ENCODE measurements at regions of chr21 and their contacts with region 1.

Region 1: GRCh38 chr21:42220138-42220701 is 1.3 kb downstream of the ABCG1 start:
- DNase-seq: peak; percentile 49 to 96 (median 73)
- ATAC-seq: peak; percentile 87
- H3K4me3 ChIP-seq: peak overlapping the region; percentile 91
- H3K4me3 Mint-ChIP-seq: peak overlapping the region; percentile 93
- H3K27ac ChIP-seq: peak overlapping the region; percentile 88 to 90
- H3K27ac Mint-ChIP-seq: peak overlapping the region; percentile 91
- H3K4me1 ChIP-seq: peaks cover 35% of the 10 kb centered on the region
- H3K4me1 Mint-ChIP-seq: peaks cover 41% of the 10 kb centered on the region
- H3K27me3 ChIP-seq: no peaks in the 10 kb centered on the region
- H3K27me3 Mint-ChIP-seq: no peaks in the 10 kb centered on the region
- CTCF ChIP-seq: no peak

Region 2: GRCh38 chr21:42062236-42063022 is 157.8 kb before region 1 on chr21:
- CTCF ChIA-PET with region 1: no interaction called
- POLR2A ChIA-PET with region 1: no interaction called
- intact Hi-C with region 1: no loop called
- DNase-seq: peak; percentile 83 to 97 (median 90)
- ATAC-seq: peak; percentile 84
- H3K4me3 ChIP-seq: peak overlapping the region; percentile 79
- H3K4me3 Mint-ChIP-seq: peak overlapping the region; percentile 81
- H3K27ac ChIP-seq: peak overlapping the region; percentile 89 to 93
- H3K27ac Mint-ChIP-seq: peak overlapping the region; percentile 98
- H3K4me1 ChIP-seq: peaks cover 56% of the 10 kb centered on the region
- H3K4me1 Mint-ChIP-seq: peaks cover 63% of the 10 kb centered on the region
- H3K27me3 ChIP-seq: no peaks in the 10 kb centered on the region
- H3K27me3 Mint-ChIP-seq: no peaks in the 10 kb centered on the region
- CTCF ChIP-seq: no peak

Region 3: DNA sequence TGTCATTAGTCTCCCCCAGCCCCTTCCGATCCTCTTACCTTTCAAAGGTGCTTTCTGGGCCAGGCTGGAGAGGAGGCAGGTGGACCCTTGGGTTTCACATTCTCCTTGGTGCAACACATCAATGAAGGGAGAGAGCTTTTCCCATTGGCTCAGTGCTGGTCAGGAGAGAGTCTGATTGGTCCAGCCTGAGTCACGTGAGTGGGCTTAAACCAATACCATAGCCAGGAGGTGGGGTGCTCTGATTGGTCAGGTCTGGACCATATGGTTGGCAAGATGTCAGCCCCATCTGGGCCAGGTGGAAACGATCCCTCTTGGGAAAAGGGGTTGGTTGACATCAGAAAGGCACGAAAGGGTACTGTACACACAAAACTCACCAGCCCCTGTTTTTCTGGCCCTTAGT is 46.0 kb before region 1 on chr21:
- CTCF ChIA-PET with region 1: no interaction called
- POLR2A ChIA-PET with region 1: no interaction called
- intact Hi-C with region 1: no loop called
- DNase-seq: no peak
- ATAC-seq: no peak
- H3K4me3 ChIP-seq: no peak overlapping the region
- H3K4me3 Mint-ChIP-seq: no peak overlapping the region
- H3K27ac ChIP-seq: no peak overlapping the region
- H3K27ac Mint-ChIP-seq: no peak overlapping the region
- H3K4me1 ChIP-seq: no peaks in the 10 kb centered on the region
- H3K4me1 Mint-ChIP-seq: peaks cover 5% of the 10 kb centered on the region
- H3K27me3 ChIP-seq: no peaks in the 10 kb centered on the region
- H3K27me3 Mint-ChIP-seq: no peaks in the 10 kb centered on the region
- CTCF ChIP-seq: no peak

Region 4: GRCh38 chr21:42187976-42188653 is 32.1 kb before region 1 on chr21:
- CTCF ChIA-PET with region 1: interaction called, 5 read pairs
- POLR2A ChIA-PET with region 1: interaction called, 32 read pairs
- intact Hi-C with region 1: loop called in 1 of 2 experiments (anchors 1 kb)
- DNase-seq: peak; percentile 61 to 94 (median 76)
- ATAC-seq: peak; percentile 90
- H3K4me3 ChIP-seq: peak overlapping the region; percentile 21
- H3K4me3 Mint-ChIP-seq: peak overlapping the region; percentile 74
- H3K27ac ChIP-seq: peak overlapping the region; percentile 83 to 88
- H3K27ac Mint-ChIP-seq: no peak overlapping the region
- H3K4me1 ChIP-seq: peaks cover 89% of the 10 kb centered on the region
- H3K4me1 Mint-ChIP-seq: peaks cover 73% of the 10 kb centered on the region
- H3K27me3 ChIP-seq: no peaks in the 10 kb centered on the region
- H3K27me3 Mint-ChIP-seq: no peaks in the 10 kb centered on the region
- CTCF ChIP-seq: no peak

Region 5: GRCh38 chr21:42199488-42200458 is 20.4 kb before region 1 on chr21:
- CTCF ChIA-PET with region 1: interaction called, 3 read pairs
- POLR2A ChIA-PET with region 1: interaction called, 4 read pairs
- intact Hi-C with region 1: loop called in 1 of 2 experiments (anchors 1 kb)
- DNase-seq: peak in 5 of 14 experiments; percentile 30 to 77 (median 71)
- ATAC-seq: peak; percentile 84
- H3K4me3 ChIP-seq: no peak overlapping the region
- H3K4me3 Mint-ChIP-seq: peak overlapping the region; percentile 31
- H3K27ac ChIP-seq: peak overlapping the region in 1 of 2 donors; percentile 64
- H3K27ac Mint-ChIP-seq: peak overlapping the region; percentile 94
- H3K4me1 ChIP-seq: peaks cover 33% of the 10 kb centered on the region
- H3K4me1 Mint-ChIP-seq: peaks cover 71% of the 10 kb centered on the region
- H3K27me3 ChIP-seq: no peaks in the 10 kb centered on the region
- H3K27me3 Mint-ChIP-seq: no peaks in the 10 kb centered on the region
- CTCF ChIP-seq: no peak

Region 6: DNA sequence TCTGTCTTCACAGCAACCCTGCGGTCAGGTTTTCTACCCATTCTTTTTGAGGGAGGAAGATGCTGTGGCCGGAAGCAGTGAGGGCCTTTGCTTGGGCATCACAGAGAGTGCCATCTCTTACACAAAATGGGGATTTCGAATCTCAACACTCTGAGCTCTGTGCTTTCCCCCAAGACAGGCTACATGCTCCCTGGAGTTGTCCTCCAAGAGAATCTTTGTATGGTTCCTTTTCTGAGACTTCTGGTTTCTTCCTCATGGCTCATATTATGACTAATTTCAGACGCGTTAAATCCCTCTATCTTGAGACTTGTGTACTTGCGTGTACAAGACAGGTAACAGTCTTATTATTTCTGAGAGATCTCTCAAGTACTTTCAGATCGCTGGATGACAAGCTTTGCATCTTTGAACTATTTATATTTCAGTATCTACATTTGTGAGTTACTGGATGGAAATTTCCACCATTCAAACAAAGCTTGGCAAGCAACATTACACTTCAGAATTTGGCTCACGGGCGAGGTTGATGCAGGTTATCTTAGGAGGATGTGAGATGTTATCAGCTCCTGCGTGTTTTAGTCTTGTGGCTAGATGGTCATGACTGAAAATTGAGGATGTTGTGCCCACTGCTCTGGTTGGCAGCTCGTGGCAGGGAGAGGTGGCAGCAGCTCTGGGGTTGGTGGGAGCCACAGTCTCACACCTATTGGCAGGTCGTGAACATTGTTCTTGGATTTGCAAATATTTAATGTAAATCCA is 18.1 kb after region 1 on chr21:
- CTCF ChIA-PET with region 1: interaction called, 27 read pairs
- POLR2A ChIA-PET with region 1: interaction called, 33 read pairs
- intact Hi-C with region 1: loop called (anchors 1 to 2 kb)
- DNase-seq: peak in 13 of 14 experiments; percentile 13 to 90 (median 43)
- ATAC-seq: peak; percentile 35
- H3K4me3 ChIP-seq: peak overlapping the region; percentile 25
- H3K4me3 Mint-ChIP-seq: peak overlapping the region; percentile 76
- H3K27ac ChIP-seq: peak overlapping the region; percentile 83 to 94
- H3K27ac Mint-ChIP-seq: peak overlapping the region; percentile 90
- H3K4me1 ChIP-seq: peaks cover 80% of the 10 kb centered on the region
- H3K4me1 Mint-ChIP-seq: peaks cover 76% of the 10 kb centered on the region
- H3K27me3 ChIP-seq: no peaks in the 10 kb centered on the region
- H3K27me3 Mint-ChIP-seq: no peaks in the 10 kb centered on the region
- CTCF ChIP-seq: no peak

Measured in CD4-positive, alpha-beta T cell (primary cell).